Natural killer cell (primary cell): ENCODE measurements at regions of chr9 and their contacts with region 1.

Region 1: GRCh38 chr9:37302277-37302676 is 120.2 kb upstream of the GRHPR start:
- DNase-seq: peak in 1 of 2 donors; percentile 74
- ATAC-seq: peak; percentile 80 to 92 (median 87)
- H3K4me3 ChIP-seq: no peak overlapping the region
- H3K4me3 Mint-ChIP-seq: peak overlapping the region; percentile 77
- H3K27ac ChIP-seq: peak overlapping the region; percentile 61
- H3K27ac Mint-ChIP-seq: peak overlapping the region; percentile 76 to 80
- H3K4me1 ChIP-seq: peaks cover 33% of the 10 kb centered on the region
- H3K4me1 Mint-ChIP-seq: peaks cover 53 to 62% of the 10 kb centered on the region in 2 donors
- H3K27me3 ChIP-seq: no peaks in the 10 kb centered on the region
- H3K27me3 Mint-ChIP-seq: no peaks in the 10 kb centered on the region
- CTCF ChIP-seq: no peak

Region 2: DNA sequence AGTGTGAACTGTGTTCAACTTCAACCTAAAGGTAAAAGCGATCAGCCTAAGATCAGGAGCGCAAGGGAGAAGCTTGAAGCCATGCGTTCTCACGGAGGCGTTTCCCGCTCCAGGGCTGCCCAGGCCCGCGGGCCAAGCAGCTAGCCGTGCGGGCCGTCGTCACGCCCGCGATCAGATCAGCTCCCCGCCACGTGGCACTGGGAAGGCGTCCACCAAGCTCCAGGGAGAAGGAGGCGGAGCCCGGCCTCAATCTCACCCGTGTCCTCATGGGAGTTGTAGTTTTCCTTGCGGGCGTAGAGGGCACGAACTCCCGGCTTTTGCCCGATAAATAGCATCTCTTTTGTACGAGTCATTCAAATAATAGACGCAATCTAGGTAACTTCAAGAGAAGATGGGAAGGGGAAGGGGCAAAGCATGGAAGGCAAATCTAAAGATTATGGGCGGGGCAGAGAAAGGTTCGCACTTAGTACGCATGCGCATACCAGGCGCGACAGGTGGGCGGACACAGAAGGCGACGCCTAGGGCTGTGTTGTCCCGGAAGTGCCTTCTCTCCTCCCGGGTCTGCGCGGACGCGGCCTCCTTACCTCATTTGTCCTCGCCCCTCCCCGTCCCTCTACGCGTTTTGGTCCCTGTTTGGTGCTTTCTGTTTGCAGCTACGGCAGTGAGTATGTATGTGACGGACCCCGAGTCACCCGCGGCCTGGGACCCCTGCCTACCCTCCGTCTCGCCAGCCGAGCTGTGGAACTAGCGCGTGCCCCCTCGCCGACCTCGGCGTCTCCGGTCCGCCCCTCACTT is 222.7 kb before region 1 on chr9:
- intact Hi-C with region 1: loop called (anchors 5 kb)
- DNase-seq: peak; percentile 85 to 97
- ATAC-seq: peak; percentile 96 to 99 (median 96)
- H3K4me3 ChIP-seq: peak overlapping the region; percentile 78
- H3K4me3 Mint-ChIP-seq: peak overlapping the region; percentile 96
- H3K27ac ChIP-seq: peak overlapping the region; percentile 94
- H3K27ac Mint-ChIP-seq: peak overlapping the region; percentile 93 to 99
- H3K4me1 ChIP-seq: peaks cover 17% of the 10 kb centered on the region
- H3K4me1 Mint-ChIP-seq: peaks cover 42 to 45% of the 10 kb centered on the region in 2 donors
- H3K27me3 ChIP-seq: no peaks in the 10 kb centered on the region
- H3K27me3 Mint-ChIP-seq: peaks cover 6 to 8% of the 10 kb centered on the region in 2 donors
- CTCF ChIP-seq: no peak

Region 3: DNA sequence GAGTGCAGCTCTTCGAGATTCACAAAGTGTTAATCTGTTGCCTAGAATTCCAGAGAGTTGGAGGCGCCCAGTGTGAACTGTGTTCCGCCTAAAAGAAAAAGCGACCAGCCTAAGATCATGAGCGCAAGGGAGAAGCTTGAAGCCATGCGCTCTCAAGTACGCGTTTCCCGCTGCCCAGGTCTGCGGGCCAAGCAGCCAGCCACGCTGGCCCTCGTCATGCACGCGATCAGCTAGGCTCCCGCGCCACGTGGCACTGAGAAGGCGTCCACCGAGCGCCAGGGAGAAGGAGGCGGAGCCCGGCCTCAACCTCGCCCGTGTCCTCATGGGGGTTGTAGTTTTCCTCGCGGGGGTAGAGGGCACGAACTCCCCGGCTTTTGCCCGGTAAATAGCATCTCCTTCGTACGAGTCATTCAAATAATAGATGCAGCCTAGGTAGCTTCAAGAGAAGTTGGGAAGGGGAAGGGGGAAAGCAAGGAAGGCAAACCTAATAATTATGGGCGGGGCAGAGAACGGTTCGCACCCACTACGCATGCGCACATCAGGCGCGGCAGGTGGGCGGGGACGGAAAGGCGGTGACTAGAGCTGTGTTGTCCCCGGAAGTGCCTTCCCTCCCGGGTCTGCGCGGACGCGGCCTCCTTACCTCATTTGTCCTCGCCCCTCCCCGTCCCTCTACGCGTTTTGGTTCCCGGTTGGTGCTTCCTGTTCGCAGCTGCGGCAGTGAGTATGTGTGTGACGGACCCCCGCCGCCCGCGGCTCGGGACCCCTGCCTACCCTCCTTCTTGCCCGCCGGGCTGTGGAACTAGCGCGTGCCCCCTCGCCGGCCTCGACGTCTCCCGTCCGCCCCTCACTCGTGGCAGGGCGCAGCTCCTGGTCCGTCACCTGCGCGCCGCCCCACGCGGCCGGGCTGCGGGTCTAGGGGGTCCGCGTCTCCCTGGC is 182.1 kb before region 1 on chr9 and contains the start of gene ZCCHC7:
- intact Hi-C with region 1: loop called (anchors 5 kb)
- DNase-seq: peak; percentile 97 to 98
- ATAC-seq: peak; percentile 92 to 98 (median 93)
- H3K4me3 ChIP-seq: peak within 1 kb of the TSS; percentile 93
- H3K4me3 Mint-ChIP-seq: peak within 1 kb of the TSS; percentile 94
- H3K27ac ChIP-seq: peak within 1 kb of the TSS; percentile 91
- H3K27ac Mint-ChIP-seq: peak within 1 kb of the TSS; percentile 96
- H3K4me1 ChIP-seq: peaks cover 9% of the 10 kb centered on the region
- H3K4me1 Mint-ChIP-seq: peaks cover 27 to 40% of the 10 kb centered on the region in 2 donors
- H3K27me3 ChIP-seq: no peaks in the 10 kb centered on the region
- H3K27me3 Mint-ChIP-seq: no peaks in the 10 kb centered on the region
- CTCF ChIP-seq: no peak
- total RNA-seq, gene ZCCHC7: 42.4 to 43.2 (median 42.8) TPM

Region 4: DNA sequence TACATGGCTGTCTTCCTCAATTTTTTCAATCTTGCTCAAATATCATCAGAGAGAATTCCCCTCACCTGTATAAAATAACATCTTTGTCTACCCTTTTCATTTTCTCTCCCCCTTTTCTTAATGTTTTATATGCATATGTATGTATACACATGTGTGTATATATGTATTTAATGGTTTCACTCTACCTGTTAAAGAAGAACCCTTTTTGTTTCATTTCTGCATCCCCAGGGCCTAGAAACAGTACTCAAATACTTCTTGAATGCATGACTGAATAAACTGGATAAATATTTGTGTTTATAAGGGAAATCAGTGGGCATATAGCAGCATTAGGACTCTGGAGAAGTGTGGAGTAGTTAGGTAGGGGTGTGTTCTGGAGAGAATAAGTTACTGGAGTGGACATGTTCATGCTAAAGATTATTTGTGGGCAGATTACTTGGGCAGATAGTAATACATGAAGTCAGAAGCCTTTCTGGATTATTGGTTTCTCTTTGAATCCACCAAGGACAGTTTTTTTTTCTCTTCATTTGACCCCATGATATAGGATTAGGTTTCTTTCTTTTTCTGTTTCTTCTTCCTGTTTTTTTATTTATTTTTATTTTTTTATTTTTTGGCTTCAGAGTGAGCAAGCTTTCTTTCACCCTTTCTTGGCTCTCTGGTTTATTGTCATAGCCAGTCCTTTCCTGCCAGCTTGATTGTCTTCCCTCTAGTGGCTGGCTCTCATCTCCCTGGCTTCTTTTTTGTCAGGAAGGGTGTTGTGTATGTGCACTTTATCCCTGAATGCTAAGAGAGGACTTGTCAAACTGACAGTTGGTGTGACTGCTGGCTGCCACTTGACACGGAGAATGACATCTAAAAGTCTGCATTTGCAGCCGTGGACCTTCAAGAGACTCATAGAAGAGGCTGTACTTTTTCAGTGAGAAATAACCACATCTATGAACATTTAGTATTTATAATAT is 92.6 kb before region 1 on chr9:
- intact Hi-C with region 1: loop called (anchors 5 kb)
- DNase-seq: no peak
- ATAC-seq: no peak
- H3K4me3 ChIP-seq: no peak overlapping the region
- H3K4me3 Mint-ChIP-seq: no peak overlapping the region
- H3K27ac ChIP-seq: peak overlapping the region; percentile 3
- H3K27ac Mint-ChIP-seq: peak overlapping the region; percentile 9
- H3K4me1 ChIP-seq: no peaks in the 10 kb centered on the region
- H3K4me1 Mint-ChIP-seq: peaks cover 34 to 36% of the 10 kb centered on the region in 2 donors
- H3K27me3 ChIP-seq: no peaks in the 10 kb centered on the region
- H3K27me3 Mint-ChIP-seq: no peaks in the 10 kb centered on the region
- CTCF ChIP-seq: no peak

Region 5: GRCh38 chr9:37262410-37262809 is 39.9 kb before region 1 on chr9:
- intact Hi-C with region 1: no loop called
- DNase-seq: peak in 1 of 2 donors; percentile 5
- ATAC-seq: no peak
- H3K4me3 ChIP-seq: no peak overlapping the region
- H3K4me3 Mint-ChIP-seq: no peak overlapping the region
- H3K27ac ChIP-seq: no peak overlapping the region
- H3K27ac Mint-ChIP-seq: no peak overlapping the region
- H3K4me1 ChIP-seq: no peaks in the 10 kb centered on the region
- H3K4me1 Mint-ChIP-seq: peaks cover 14 to 18% of the 10 kb centered on the region in 2 donors
- H3K27me3 ChIP-seq: no peaks in the 10 kb centered on the region
- H3K27me3 Mint-ChIP-seq: no peaks in the 10 kb centered on the region
- CTCF ChIP-seq: no peak

Region 6: GRCh38 chr9:37800631-37801286 is 498.5 kb after region 1 on chr9 and contains the start of gene DCAF10:
- intact Hi-C with region 1: no loop called
- DNase-seq: peak; percentile 91 to 92
- ATAC-seq: peak; percentile 88 to 94 (median 89)
- H3K4me3 ChIP-seq: peak within 1 kb of the TSS; percentile 89
- H3K4me3 Mint-ChIP-seq: peak within 1 kb of the TSS; percentile 92
- H3K27ac ChIP-seq: peak within 1 kb of the TSS; percentile 79
- H3K27ac Mint-ChIP-seq: peak within 1 kb of the TSS; percentile 80 to 87
- H3K4me1 ChIP-seq: peaks cover 17% of the 10 kb centered on the region
- H3K4me1 Mint-ChIP-seq: peaks cover 20 to 30% of the 10 kb centered on the region in 2 donors
- H3K27me3 ChIP-seq: no peaks in the 10 kb centered on the region
- H3K27me3 Mint-ChIP-seq: no peaks in the 10 kb centered on the region
- CTCF ChIP-seq: no peak
- total RNA-seq, gene DCAF10: 12.9 to 21.0 (median 18.5) TPM